ENCODE measurements at regions of chr2 and their contacts with region 1.

Region 1: DNA sequence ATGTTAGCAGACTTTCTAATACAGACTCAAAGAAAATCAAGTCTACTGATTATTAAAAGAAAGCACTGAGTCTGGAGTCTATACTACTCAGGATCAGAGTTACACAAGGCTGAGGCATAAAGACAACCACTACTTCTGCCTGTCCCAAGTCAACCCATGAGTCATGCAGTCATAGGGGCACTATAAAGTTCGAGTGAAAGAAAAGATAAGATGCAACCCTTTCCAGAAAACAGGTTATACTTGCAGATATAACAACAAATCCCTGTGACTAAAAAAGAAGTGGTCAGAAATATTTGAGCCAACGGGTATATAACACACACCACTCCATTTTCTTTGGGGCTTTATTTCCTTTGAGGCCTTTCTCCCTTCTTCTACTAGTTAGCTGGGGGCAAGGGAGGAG is 18.6 kb upstream of the SCRN3 start:
- DNase-seq: no peak
- H3K4me3 ChIP-seq: no peak overlapping the region
- H3K27ac ChIP-seq: no peak overlapping the region
- H3K4me1 ChIP-seq: no peaks in the 10 kb centered on the region
- H3K27me3 ChIP-seq: no peaks in the 10 kb centered on the region
- CTCF ChIP-seq: no peak
- EP300 ChIP-seq: no peak
- POLR2A ChIP-seq: no peak

Region 2: GRCh38 chr2:174389542-174389941 is 12.6 kb after region 1 on chr2:
- intact Hi-C with region 1: loop called in 1 of 4 experiments (anchors 2 kb)
- DNase-seq: no peak
- H3K4me3 ChIP-seq: no peak overlapping the region
- H3K27ac ChIP-seq: no peak overlapping the region
- H3K4me1 ChIP-seq: peaks cover 2% of the 10 kb centered on the region
- H3K27me3 ChIP-seq: no peaks in the 10 kb centered on the region
- CTCF ChIP-seq: no peak
- EP300 ChIP-seq: no peak
- POLR2A ChIP-seq: no peak

Region 3: GRCh38 chr2:174914853-174915760 is 538.1 kb after region 1 on chr2:
- intact Hi-C with region 1: no loop called
- DNase-seq: peak; percentile 21 to 66 (median 30)
- H3K4me3 ChIP-seq: no peak overlapping the region
- H3K27ac ChIP-seq: no peak overlapping the region
- H3K4me1 ChIP-seq: peaks cover 1% of the 10 kb centered on the region
- H3K27me3 ChIP-seq: no peaks in the 10 kb centered on the region
- CTCF ChIP-seq: no peak
- EP300 ChIP-seq: no peak
- POLR2A ChIP-seq: no peak

Measured in ovary (tissue), 10 donors.